ENCODE measurements at regions of chr2 and their contacts with region 1.

Region 1: GRCh38 chr2:48332286-48332685 is 197.7 kb upstream of the STON1 start:
- DNase-seq: peak; percentile 79
- ATAC-seq: peak; percentile 89
- H3K4me3 ChIP-seq: peak overlapping the region in 1 of 5 experiments; percentile 8
- H3K4me3 Mint-ChIP-seq: peak overlapping the region; percentile 10
- H3K27ac ChIP-seq: peak overlapping the region; percentile 38 to 56
- H3K27ac Mint-ChIP-seq: no peak overlapping the region
- H3K4me1 ChIP-seq: peaks cover 10 to 39% of the 10 kb centered on the region in 2 donors
- H3K4me1 Mint-ChIP-seq: peaks cover 35% of the 10 kb centered on the region
- H3K27me3 ChIP-seq: no peaks in the 10 kb centered on the region
- H3K27me3 Mint-ChIP-seq: no peaks in the 10 kb centered on the region
- CTCF ChIP-seq: no peak

Region 2: DNA sequence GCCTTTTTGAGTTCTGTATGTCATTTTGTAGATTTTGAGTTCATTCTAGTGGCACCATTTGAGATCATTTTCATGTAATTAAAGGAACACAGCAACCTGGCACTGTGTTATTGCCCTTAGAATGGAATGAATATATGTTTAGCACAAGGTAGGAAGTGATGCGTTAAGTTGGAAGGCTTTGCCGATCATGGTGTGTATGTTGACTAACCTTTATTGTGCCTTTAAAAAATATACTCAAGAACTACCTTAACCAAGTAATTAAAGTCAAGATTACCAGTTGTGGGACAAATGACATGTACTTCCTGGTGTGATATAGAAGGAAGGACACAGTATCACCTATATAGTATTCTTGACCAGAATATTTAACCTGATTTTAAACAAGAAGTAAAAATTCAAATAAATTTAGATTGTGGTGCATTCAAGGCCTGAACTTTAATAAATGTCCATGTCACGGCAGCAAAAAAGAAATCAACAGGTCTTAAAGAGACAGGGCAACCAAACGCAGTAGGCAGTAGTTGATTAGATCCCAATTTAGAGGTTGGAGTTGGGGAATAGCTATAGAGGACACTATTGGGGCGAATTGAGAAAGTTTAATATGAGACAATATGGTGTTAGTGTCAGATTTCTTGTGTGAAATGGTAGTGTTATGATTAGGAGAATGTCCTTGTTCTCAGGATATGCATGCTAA is 860.7 kb before region 1 on chr2:
- CTCF ChIA-PET with region 1: no interaction called
- POLR2A ChIA-PET with region 1: no interaction called
- intact Hi-C with region 1: no loop called
- DNase-seq: no peak
- ATAC-seq: no peak
- H3K4me3 ChIP-seq: no peak overlapping the region
- H3K4me3 Mint-ChIP-seq: no peak overlapping the region
- H3K27ac ChIP-seq: no peak overlapping the region
- H3K27ac Mint-ChIP-seq: no peak overlapping the region
- H3K4me1 ChIP-seq: no peaks in the 10 kb centered on the region
- H3K4me1 Mint-ChIP-seq: no peaks in the 10 kb centered on the region
- H3K27me3 ChIP-seq: no peaks in the 10 kb centered on the region
- H3K27me3 Mint-ChIP-seq: no peaks in the 10 kb centered on the region
- CTCF ChIP-seq: no peak

Region 3: GRCh38 chr2:48320742-48321141 is 11.5 kb before region 1 on chr2:
- CTCF ChIA-PET with region 1: interaction called, 3 read pairs
- POLR2A ChIA-PET with region 1: no interaction called
- intact Hi-C with region 1: loop called (anchors 1 kb)
- DNase-seq: no peak
- ATAC-seq: no peak
- H3K4me3 ChIP-seq: peak overlapping the region in 1 of 5 experiments; percentile 12
- H3K4me3 Mint-ChIP-seq: peak overlapping the region; percentile 73
- H3K27ac ChIP-seq: peak overlapping the region; percentile 78 to 81
- H3K27ac Mint-ChIP-seq: peak overlapping the region; percentile 90
- H3K4me1 ChIP-seq: peaks cover 47 to 73% of the 10 kb centered on the region in 2 donors
- H3K4me1 Mint-ChIP-seq: peaks cover 67% of the 10 kb centered on the region
- H3K27me3 ChIP-seq: no peaks in the 10 kb centered on the region
- H3K27me3 Mint-ChIP-seq: no peaks in the 10 kb centered on the region
- CTCF ChIP-seq: no peak

Region 4: DNA sequence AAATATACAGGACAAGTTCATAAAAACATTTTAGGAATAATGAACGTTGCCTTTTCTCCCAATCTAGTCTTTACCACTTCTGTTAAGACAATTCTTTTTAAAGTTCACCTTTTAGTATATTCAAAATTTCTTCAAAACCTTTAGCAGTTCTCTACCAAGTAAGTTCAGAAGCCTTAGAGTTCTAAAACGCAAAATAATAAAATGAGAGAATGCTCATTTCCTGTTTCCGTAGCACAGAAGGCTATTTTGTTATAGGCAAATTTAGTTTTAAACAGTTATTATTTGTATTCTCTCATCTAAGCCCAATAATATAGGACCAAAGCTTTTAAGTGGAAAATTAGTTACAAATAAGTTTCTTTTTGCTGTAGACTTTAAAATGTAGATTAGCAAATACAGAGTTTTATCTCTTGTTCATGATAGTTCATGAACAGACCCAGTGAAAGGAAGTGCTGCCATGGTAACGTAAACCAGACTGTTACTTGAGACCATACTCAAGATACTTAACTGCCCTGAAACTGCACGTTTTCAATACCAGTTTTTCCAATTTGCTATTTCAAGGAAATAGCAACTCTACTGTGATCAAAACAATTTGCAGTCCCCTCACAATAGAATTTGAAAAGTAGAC is 24.5 kb after region 1 on chr2:
- CTCF ChIA-PET with region 1: no interaction called
- POLR2A ChIA-PET with region 1: no interaction called
- intact Hi-C with region 1: loop called (anchors 2 kb)
- DNase-seq: peak; percentile 59
- ATAC-seq: peak; percentile 68
- H3K4me3 ChIP-seq: peak overlapping the region in 2 of 5 experiments; percentile 16 to 43
- H3K4me3 Mint-ChIP-seq: peak overlapping the region; percentile 72
- H3K27ac ChIP-seq: peak overlapping the region; percentile 58 to 85
- H3K27ac Mint-ChIP-seq: peak overlapping the region; percentile 86
- H3K4me1 ChIP-seq: peaks cover 40 to 46% of the 10 kb centered on the region in 2 donors
- H3K4me1 Mint-ChIP-seq: peaks cover 61% of the 10 kb centered on the region
- H3K27me3 ChIP-seq: no peaks in the 10 kb centered on the region
- H3K27me3 Mint-ChIP-seq: no peaks in the 10 kb centered on the region
- CTCF ChIP-seq: no peak